ENCODE measurements at regions of chr2 and their contacts with region 1.

Region 1: DNA sequence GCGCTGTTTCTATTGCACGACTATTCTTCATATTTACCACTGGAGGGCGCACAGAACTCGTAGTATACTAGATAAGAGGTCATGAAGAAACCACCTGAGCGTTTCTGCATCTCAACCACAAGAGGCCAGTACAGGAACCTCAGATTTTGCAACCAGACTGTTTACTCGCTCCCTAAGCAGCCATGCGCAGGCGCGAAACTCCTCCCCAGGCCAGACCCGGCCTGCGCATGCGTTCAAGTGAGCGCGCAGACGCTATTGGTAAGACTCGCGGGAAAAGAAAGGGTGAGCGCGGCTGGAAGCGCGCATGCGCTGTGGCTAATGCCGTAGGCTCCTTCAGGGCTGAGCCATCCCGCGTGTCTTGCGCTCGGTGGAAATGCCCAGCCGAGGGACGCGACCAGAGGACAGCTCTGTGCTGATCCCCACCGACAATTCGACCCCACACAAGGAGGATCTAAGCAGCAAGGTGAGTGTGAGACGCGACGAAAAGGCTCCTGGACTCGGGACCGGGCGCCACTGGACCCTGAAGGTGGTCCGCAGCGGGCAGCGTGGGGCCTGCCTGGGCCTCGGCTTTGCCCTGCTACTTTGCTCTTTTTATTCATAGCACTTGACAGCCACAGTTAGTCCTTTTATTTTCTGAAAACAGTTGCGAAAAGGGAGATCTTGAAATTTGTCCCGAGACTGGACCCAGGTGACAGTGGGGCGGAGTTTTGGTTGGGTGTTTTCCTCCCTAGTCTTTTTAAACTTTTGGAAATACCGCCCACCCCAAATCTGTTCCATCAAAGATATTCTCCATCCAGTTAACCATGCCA is at the start of gene ASNSD1:
- DNase-seq: peak; percentile 96
- H3K4me3 ChIP-seq: peak within 1 kb of the TSS; percentile 93 to 99
- H3K27ac ChIP-seq: peak within 1 kb of the TSS; percentile 56 to 87
- H3K4me1 ChIP-seq: peaks cover 0 to 6% of the 10 kb centered on the region in 2 experiments; a peak in 3 of 4 replicates
- H3K27me3 ChIP-seq: no peaks in the 10 kb centered on the region
- CTCF ChIP-seq: peak; percentile 98
- EP300 ChIP-seq: peak in 1 of 2 experiments; percentile 33; a peak in 1 of 4 replicates
- RAD21 ChIP-seq: peak; percentile 99
- polyA plus RNA-seq, gene ASNSD1: 15.5 and 19.5 TPM in 2 replicates

Region 2: DNA sequence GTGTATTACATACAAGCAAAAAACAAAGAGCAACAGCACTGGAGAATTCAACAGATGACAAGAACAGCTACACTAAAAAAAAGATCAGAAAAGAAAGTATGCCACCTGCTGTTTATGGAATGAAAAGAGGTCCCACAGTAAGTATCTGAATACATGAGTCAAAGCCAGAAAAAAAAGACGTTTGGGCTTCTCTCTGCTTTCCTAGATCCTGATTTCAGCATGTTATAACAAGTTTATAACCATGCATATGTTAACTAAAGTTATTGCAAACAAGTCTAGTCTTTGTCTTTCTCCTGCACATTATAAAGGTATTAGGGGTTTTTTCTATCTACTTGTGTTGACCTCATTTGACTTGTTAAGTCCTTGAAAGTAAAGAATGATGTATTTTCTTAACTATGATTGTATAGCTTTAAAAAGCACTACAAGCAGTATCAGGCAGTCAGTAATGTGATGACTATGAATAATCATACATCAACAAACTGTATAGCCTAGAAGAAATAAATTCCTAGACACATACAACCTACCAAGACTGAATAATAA is 373.3 kb before region 1 on chr2:
- CTCF ChIA-PET with region 1: no interaction called
- POLR2A ChIA-PET with region 1: no interaction called
- DNase-seq: peak; percentile 23
- H3K4me3 ChIP-seq: no peak overlapping the region; a peak in 1 of 4 replicates
- H3K27ac ChIP-seq: peak overlapping the region; percentile 88 to 98; a peak in 3 of 4 replicates
- H3K4me1 ChIP-seq: peaks cover 3 to 34% of the 10 kb centered on the region in 2 experiments
- H3K27me3 ChIP-seq: no peaks in the 10 kb centered on the region
- CTCF ChIP-seq: peak; percentile 75
- EP300 ChIP-seq: no peak
- RAD21 ChIP-seq: peak; percentile 88

Region 3: DNA sequence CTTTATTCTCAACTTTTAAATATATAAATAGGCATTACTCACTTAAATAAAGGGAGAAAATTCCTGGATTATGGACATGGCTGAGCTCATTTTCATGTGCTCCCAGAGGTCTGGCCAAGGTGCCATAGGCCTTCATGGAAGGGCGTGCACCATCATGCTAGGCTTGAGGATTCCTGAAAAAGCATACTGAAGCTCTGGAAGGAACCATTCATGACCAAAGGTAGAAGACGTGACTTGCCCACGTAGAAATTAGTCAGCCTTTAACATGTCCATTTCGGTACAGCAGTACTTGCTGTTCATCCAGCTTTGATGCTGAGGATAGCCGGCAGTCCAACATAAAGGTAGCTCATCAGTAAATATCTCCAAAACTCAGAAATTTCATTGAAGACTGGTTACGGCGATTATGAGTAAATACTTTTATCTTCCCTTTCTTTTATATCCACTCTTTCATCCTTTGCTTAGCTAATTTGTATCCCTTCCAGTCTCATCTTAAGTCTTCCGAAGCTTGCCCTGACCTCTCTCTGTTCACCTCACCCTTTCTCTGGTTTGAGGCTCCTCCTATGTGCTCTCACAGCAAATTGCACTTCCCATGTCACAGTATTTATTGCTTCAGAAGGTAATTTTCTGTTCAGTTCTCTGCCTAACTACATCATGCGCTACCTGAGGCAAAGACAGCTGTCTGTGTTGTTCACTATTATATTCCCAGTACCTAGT is 32.4 kb before region 1 on chr2:
- CTCF ChIA-PET with region 1: interaction called, 12 read pairs
- POLR2A ChIA-PET with region 1: no interaction called
- DNase-seq: no peak
- H3K4me3 ChIP-seq: no peak overlapping the region
- H3K27ac ChIP-seq: peak overlapping the region; percentile 12 to 54; a peak in 2 of 4 replicates
- H3K4me1 ChIP-seq: 0 out of 4 replicates have a peak, but pooled peaks cover 0 to 4% of the 10 kb centered on the region in 2 experiments
- H3K27me3 ChIP-seq: no peaks in the 10 kb centered on the region
- CTCF ChIP-seq: no peak
- EP300 ChIP-seq: no peak
- RAD21 ChIP-seq: no peak; the same call in 1 of the 2 replicates

Region 4: GRCh38 chr2:189651284-189651683 is 10.1 kb before region 1 on chr2:
- CTCF ChIA-PET with region 1: interaction called, 25 read pairs
- POLR2A ChIA-PET with region 1: no interaction called
- DNase-seq: no peak
- H3K4me3 ChIP-seq: no peak overlapping the region
- H3K27ac ChIP-seq: no peak overlapping the region
- H3K4me1 ChIP-seq: no peaks in the 10 kb centered on the region
- H3K27me3 ChIP-seq: no peaks in the 10 kb centered on the region
- CTCF ChIP-seq: no peak
- EP300 ChIP-seq: no peak
- RAD21 ChIP-seq: no peak

Region 5: GRCh38 chr2:189698020-189698887 is 36.9 kb after region 1 on chr2:
- CTCF ChIA-PET with region 1: interaction called, 60 read pairs
- POLR2A ChIA-PET with region 1: no interaction called
- DNase-seq: peak; percentile 26
- H3K4me3 ChIP-seq: no peak overlapping the region
- H3K27ac ChIP-seq: no peak overlapping the region
- H3K4me1 ChIP-seq: no peaks in the 10 kb centered on the region
- H3K27me3 ChIP-seq: no peaks in the 10 kb centered on the region
- CTCF ChIP-seq: peak; percentile 72
- EP300 ChIP-seq: no peak
- RAD21 ChIP-seq: peak; percentile 48

Region 6: DNA sequence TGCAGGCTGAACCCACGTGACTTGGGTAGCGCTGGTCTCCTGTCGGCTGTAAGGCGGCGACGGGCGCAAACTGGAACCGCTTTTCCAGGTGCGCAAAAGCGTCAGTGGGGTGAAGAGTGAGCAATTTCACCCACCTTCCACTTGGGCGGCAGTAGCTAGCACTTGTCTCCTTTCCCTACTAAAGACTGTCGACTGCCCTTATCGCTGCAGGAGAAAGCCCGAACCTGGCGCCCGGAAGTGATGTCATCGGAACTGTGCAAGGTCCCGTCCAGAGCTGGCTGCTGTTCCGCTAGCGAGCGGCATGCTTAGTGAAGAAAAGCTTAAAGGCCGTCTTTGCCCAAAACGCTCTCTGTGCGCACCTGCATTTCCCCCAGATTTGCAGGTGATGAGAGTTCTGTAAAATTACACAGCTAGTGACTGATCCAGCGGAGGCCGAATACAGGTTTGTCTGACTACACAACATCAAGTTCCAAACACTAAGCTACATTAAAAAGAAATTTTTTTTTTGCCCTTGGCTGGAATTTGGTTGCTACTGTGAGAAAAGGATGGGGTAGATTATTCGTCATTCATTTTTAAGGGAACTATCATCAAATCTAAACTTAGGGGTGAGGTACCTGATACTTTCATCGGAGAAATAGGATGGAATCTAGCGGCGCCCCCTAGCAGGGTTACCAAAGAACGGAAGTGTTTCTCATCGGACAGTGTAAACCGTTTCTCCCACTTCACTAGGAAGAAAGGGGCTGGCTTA is 101.4 kb after region 1 on chr2 and contains the start of gene OSGEPL1:
- CTCF ChIA-PET with region 1: interaction called, 26 read pairs
- POLR2A ChIA-PET with region 1: no interaction called
- DNase-seq: peak; percentile 81
- H3K4me3 ChIP-seq: peak within 1 kb of the TSS; percentile 83 to 90
- H3K27ac ChIP-seq: peak within 1 kb of the TSS; percentile 86 to 97
- H3K4me1 ChIP-seq: peaks cover 8 to 13% of the 10 kb centered on the region in 2 experiments; a peak in 2 of 4 replicates
- H3K27me3 ChIP-seq: no peaks in the 10 kb centered on the region
- CTCF ChIP-seq: peak; percentile 80
- EP300 ChIP-seq: 0 out of 4 replicates have a peak, but pooled peaks of 1 of the 2 experiments have one; percentile 28
- RAD21 ChIP-seq: no peak
- polyA plus RNA-seq, gene OSGEPL1: 5.8 and 8.3 TPM in 2 replicates